Activated CD4-positive, alpha-beta T cell treated with anti-CD3 and anti-CD28 coated beads for 36 hours (primary cell): ENCODE measurements at regions of chr12 and their contacts with region 1.

Region 1: DNA sequence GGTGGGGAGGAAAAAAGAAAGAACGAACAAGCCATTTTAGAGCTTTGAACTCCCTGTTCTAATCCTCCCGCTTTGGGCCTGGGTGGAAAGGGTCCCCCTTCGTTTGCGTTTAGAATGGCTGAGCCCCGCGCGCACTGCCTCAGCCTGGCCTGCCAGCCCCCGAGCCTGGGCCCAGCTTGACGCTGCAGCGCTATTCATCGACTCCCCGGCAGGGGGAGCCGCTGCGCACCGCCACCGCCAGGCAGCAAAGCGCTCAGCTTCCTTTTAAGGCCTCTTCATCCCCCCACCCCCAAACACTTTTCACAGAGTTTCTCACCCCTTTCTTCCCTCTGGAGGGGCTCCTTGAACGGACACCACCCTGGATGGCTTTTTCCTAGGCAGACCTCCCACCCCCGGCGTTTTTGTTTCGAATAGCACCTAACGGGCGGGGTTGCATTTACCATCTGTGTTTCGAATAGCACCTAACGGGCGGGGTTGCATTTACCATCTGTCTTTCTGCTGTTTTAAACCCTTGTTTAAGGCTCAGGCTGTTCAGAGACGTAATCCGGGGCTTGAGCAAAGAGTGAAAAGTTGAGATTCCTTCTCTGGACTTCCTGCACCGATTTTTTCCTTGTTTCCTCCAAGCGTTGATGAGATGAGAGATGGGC is 56.4 kb upstream of the PIWIL1 start:
- DNase-seq: peak; percentile 77
- ATAC-seq: peak; percentile 77
- H3K4me3 Mint-ChIP-seq: peak overlapping the region; percentile 54
- H3K27ac Mint-ChIP-seq: no peak overlapping the region
- H3K4me1 Mint-ChIP-seq: peaks cover 5% of the 10 kb centered on the region
- H3K27me3 Mint-ChIP-seq: peaks cover 3% of the 10 kb centered on the region

Region 2: GRCh38 chr12:129844662-129845220 is 436.5 kb before region 1 on chr12:
- CTCF ChIA-PET with region 1: no interaction called
- POLR2A ChIA-PET with region 1: no interaction called
- intact Hi-C with region 1: no loop called
- DNase-seq: no peak
- ATAC-seq: no peak
- H3K4me3 Mint-ChIP-seq: no peak overlapping the region
- H3K27ac Mint-ChIP-seq: no peak overlapping the region
- H3K4me1 Mint-ChIP-seq: no peaks in the 10 kb centered on the region
- H3K27me3 Mint-ChIP-seq: no peaks in the 10 kb centered on the region

Region 3: DNA sequence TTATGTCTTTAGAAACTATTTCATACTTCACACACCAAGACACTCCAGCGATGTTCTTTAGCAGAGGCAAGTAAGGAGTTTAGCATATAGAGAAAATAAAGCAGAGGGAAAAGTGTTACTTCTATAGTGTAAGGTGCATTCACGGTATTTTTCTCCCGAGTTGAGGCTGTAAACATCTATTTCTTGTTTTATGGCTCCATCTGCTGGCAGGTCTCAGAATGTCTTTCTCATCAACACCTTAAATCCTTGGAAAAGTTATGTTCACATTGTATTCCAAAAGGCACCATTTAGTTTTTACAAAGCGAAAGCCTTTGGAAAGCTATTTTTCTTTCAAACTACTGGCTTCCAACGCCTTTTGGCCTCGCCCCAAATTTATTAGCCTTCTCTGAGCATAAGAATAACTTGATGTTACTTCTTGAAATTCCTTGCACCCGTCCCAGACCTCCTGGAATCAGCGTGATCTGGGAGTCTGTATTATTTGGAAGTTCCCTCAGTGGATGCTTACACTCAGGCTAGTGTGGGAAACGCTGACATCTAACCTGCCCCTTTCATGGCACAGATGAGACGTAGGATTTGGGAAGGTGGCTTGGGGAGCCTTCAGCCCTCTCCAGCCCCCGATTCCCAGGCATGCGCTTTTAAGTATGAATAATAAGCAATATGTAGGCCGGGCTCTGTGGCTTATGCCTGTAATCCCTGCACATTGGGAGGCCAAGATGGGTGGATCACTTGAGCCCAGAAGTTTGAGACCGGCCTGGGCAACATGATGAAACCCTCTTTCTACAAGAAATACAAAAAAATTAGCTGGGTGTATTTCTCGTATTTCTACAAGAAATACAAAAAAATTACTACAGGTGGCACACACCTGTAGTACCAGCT is 54.5 kb after region 1 on chr12:
- CTCF ChIA-PET with region 1: interaction called, 14 read pairs
- POLR2A ChIA-PET with region 1: no interaction called
- intact Hi-C with region 1: loop called in 1 of 2 experiments (anchors 1 kb)
- DNase-seq: peak; percentile 47
- ATAC-seq: peak; percentile 30
- H3K4me3 Mint-ChIP-seq: no peak overlapping the region
- H3K27ac Mint-ChIP-seq: no peak overlapping the region
- H3K4me1 Mint-ChIP-seq: no peaks in the 10 kb centered on the region
- H3K27me3 Mint-ChIP-seq: peaks cover 23% of the 10 kb centered on the region

Region 4: GRCh38 chr12:130434560-130434959 is 153.3 kb after region 1 on chr12:
- CTCF ChIA-PET with region 1: no interaction called
- POLR2A ChIA-PET with region 1: no interaction called
- intact Hi-C with region 1: no loop called
- DNase-seq: no peak
- ATAC-seq: no peak
- H3K4me3 Mint-ChIP-seq: no peak overlapping the region
- H3K27ac Mint-ChIP-seq: no peak overlapping the region
- H3K4me1 Mint-ChIP-seq: no peaks in the 10 kb centered on the region
- H3K27me3 Mint-ChIP-seq: no peaks in the 10 kb centered on the region